ENCODE measurements at regions of chr7 and their contacts with region 1.

Region 1: GRCh38 chr7:64665980-64666662 is at the start of gene ZNF107:
- DNase-seq: peak; percentile 88
- ATAC-seq: peak; percentile 96
- H3K4me3 ChIP-seq: peak within 1 kb of the TSS; percentile 70 to 100 (median 96)
- H3K4me3 Mint-ChIP-seq: peak within 1 kb of the TSS; percentile 97
- H3K27ac ChIP-seq: peak within 1 kb of the TSS; percentile 92 to 96
- H3K27ac Mint-ChIP-seq: peak within 1 kb of the TSS; percentile 97
- H3K4me1 ChIP-seq: peaks cover 35 to 37% of the 10 kb centered on the region in 2 donors
- H3K4me1 Mint-ChIP-seq: peaks cover 59% of the 10 kb centered on the region
- H3K27me3 ChIP-seq: no peaks in the 10 kb centered on the region
- H3K27me3 Mint-ChIP-seq: no peaks in the 10 kb centered on the region
- CTCF ChIP-seq: no peak
- total RNA-seq, gene ZNF107: 70.7 and 73.7 TPM in 2 replicates

Region 2: DNA sequence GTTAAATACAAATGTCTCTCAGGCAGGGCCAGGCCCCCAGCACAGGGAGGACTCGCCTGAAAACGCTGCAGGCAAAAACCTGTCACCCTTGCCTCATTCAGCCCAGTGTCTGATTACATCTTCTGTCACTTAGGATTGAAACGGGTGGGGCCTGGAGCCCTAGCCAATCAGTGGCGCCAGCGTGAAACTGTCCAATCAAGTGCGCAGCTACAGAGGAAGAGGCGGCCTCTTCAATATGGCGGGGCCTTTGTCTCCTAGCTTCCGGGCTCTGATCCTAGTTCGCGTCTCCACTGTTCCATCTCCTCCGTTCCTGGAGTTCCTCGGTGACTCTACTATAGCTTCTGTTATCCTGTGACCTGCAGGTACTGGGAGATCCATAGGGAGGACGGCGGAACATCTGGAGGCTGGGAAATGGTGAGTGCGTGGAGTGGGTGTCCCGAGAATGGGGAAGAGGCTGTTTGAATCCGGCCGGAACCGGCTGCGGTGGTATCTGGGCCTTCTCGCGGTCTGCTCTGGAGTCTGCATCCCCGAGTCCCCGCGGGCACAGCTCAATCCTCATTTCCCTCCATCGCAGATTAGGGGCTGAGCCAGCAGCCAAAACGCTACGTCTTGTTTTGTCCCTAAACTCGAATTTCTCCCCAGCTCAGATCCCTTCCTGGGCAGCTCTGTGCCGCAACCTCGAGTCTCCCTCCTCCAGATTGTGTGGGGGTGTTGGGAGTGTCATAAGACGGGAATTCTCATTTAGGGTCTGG is 352.2 kb before region 1 on chr7 and contains the start of gene ZNF736:
- CTCF ChIA-PET with region 1: no interaction called
- POLR2A ChIA-PET with region 1: no interaction called
- intact Hi-C with region 1: loop called (anchors 2 kb)
- DNase-seq: peak; percentile 92
- ATAC-seq: peak; percentile 100
- H3K4me3 ChIP-seq: peak within 1 kb of the TSS; percentile 76 to 99 (median 92)
- H3K4me3 Mint-ChIP-seq: peak within 1 kb of the TSS; percentile 99
- H3K27ac ChIP-seq: peak within 1 kb of the TSS; percentile 88 to 97
- H3K27ac Mint-ChIP-seq: peak within 1 kb of the TSS; percentile 99
- H3K4me1 ChIP-seq: peaks cover 20 to 31% of the 10 kb centered on the region in 2 donors
- H3K4me1 Mint-ChIP-seq: peaks cover 38% of the 10 kb centered on the region
- H3K27me3 ChIP-seq: no peaks in the 10 kb centered on the region
- H3K27me3 Mint-ChIP-seq: no peaks in the 10 kb centered on the region
- CTCF ChIP-seq: no peak
- total RNA-seq, gene ZNF736: 79.8 and 85.0 TPM in 2 replicates

Region 3: DNA sequence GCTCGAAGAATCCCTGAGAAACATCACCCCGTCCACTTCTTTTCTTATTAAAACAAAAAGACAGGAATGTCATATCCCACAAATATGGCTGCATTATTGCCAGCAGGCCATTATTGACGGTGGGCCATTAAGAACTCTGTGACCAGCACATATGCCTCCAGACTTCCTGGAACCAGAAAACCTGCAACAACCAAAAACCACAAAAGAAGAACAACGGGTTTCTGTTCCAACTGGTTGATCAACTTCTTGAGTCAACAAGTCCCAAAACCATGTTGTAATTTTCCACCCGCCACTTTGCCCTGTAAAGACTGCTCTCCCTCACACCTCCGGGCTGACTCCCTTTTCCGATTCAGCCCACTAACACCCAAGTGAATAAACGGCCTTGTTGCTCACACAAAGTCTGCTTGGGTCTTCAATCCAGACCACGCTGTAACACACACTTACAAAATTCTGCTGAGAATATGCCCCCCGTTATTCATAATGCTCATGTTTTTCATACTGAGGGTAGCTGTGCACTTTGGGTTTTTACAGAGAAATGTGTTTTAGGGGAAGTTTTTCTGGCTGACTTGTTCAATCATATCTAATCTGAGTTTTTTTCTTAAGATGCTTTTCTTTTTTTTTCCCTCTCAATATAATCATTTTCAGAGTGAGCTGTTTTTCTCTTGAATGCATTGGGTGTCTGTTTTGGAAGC is 20.5 kb after region 1 on chr7:
- CTCF ChIA-PET with region 1: interaction called, 6 read pairs
- POLR2A ChIA-PET with region 1: interaction called, 7 read pairs
- intact Hi-C with region 1: loop called (anchors 1 kb)
- DNase-seq: peak; percentile 8
- ATAC-seq: peak; percentile 83
- H3K4me3 ChIP-seq: peak overlapping the region in 3 of 5 experiments; percentile 5 to 45 (median 13)
- H3K4me3 Mint-ChIP-seq: peak overlapping the region; percentile 85
- H3K27ac ChIP-seq: peak overlapping the region; percentile 85 to 88
- H3K27ac Mint-ChIP-seq: no peak overlapping the region
- H3K4me1 ChIP-seq: peaks cover 11 to 62% of the 10 kb centered on the region in 2 donors
- H3K4me1 Mint-ChIP-seq: peaks cover 69% of the 10 kb centered on the region
- H3K27me3 ChIP-seq: no peaks in the 10 kb centered on the region
- H3K27me3 Mint-ChIP-seq: no peaks in the 10 kb centered on the region
- CTCF ChIP-seq: no peak

Region 4: DNA sequence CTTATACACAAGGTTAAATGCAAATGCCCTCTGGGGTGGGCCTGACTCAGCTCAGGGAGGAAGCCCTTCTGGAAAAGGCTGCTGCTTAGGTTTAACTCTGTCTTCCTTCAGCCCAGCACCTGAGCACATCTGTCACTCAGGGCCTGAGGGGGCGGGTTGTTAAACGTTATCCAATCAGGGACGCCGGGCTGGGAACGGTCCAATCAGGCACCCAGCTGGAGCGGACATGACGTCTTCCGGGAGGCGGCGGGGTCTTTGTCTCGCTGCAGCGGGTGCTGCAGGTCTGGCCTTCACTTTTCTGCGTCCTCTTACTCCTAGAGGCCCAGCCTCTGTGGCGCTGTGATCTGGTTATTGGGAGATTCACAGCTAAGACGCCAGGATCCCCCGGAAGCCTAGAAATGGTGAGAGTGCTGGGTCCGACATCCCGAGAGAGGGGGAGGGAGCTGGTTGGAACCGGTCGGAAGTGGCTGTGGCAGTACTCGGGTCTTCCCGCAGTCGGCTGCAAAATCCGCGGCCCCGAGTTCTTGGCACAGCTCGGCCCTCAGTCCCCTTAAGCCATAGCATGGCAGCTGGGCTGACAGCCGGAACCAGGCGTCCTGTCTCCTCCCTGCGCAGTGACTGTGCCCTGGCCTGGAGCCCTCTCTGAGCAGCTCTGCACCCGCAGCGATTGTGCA is 128.2 kb after region 1 on chr7 and contains the start of gene ZNF138:
- CTCF ChIA-PET with region 1: interaction called, 9 read pairs
- POLR2A ChIA-PET with region 1: interaction called, 16 read pairs
- intact Hi-C with region 1: loop called (anchors 1 kb)
- DNase-seq: peak; percentile 93
- ATAC-seq: peak; percentile 99
- H3K4me3 ChIP-seq: peak within 1 kb of the TSS; percentile 72 to 89 (median 76)
- H3K4me3 Mint-ChIP-seq: peak within 1 kb of the TSS; percentile 99
- H3K27ac ChIP-seq: peak within 1 kb of the TSS; percentile 76 to 84
- H3K27ac Mint-ChIP-seq: peak within 1 kb of the TSS; percentile 97
- H3K4me1 ChIP-seq: peaks cover 13 to 14% of the 10 kb centered on the region in 2 donors
- H3K4me1 Mint-ChIP-seq: peaks cover 24% of the 10 kb centered on the region
- H3K27me3 ChIP-seq: no peaks in the 10 kb centered on the region
- H3K27me3 Mint-ChIP-seq: no peaks in the 10 kb centered on the region
- CTCF ChIP-seq: no peak
- total RNA-seq, gene ZNF138: 23.0 and 26.6 TPM in 2 replicates

Region 5: DNA sequence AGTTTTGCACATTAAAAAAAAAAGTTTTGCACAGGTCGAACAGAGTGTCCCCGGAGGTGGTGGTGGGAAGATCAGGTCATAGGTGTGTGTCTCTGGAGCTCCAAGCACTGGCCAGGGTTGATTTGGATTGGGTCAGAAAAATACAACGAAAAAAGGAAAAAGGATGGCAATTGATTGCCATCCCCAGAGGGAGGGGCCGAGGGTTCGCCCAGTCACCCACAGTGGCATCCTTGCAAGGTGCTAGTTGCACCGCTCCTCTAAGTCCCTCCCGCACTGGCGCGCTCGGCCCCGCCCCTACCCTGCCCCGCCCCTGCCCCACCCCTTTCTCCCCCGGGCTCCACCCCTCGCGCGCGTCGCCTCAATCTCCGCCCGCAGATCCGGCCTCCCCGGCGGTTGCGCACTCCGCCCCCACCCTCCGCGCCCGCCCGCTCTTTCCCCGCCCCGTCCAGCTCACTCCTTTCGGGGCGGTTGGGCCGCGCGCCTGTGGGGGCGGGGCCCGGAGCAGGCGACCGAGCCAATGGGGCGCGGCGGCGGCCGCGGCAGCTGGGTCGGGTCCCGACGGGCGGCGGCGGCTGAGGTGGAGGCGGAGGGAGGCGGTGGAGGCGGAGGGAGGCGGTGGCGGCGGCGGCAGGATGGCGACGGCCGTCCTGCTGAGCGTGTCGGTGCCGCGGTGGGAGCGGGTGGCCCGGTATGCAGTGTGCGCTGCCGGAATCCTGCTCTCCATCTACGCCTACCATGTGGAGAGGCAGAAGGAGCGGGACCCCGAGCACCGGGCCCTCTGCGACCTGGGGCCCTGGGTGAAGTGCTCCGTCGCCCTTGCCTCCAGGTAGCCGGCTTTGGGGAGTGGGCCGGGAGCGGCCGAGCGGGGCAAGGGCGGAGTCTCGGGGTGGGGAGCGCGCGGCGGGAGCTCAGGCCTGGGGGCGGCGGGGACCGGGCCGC is 371.9 kb after region 1 on chr7:
- CTCF ChIA-PET with region 1: no interaction called
- POLR2A ChIA-PET with region 1: no interaction called
- intact Hi-C with region 1: loop called (anchors 5 kb)
- DNase-seq: peak; percentile 97
- ATAC-seq: peak; percentile 91
- H3K4me3 ChIP-seq: peak overlapping the region in 4 of 5 experiments; percentile 65 to 76 (median 70)
- H3K4me3 Mint-ChIP-seq: peak overlapping the region; percentile 70
- H3K27ac ChIP-seq: peak overlapping the region; percentile 76 to 79
- H3K27ac Mint-ChIP-seq: peak overlapping the region; percentile 72
- H3K4me1 ChIP-seq: peaks cover 9 to 12% of the 10 kb centered on the region in 2 donors
- H3K4me1 Mint-ChIP-seq: peaks cover 8% of the 10 kb centered on the region
- H3K27me3 ChIP-seq: no peaks in the 10 kb centered on the region
- H3K27me3 Mint-ChIP-seq: no peaks in the 10 kb centered on the region
- CTCF ChIP-seq: no peak